Activated CD4-positive, alpha-beta T cell treated with anti-CD3 and anti-CD28 coated beads, Interleukin-2, amount 10 ng/mL, durations not matched to agents 24 days and 14 days (primary cell): ENCODE measurements at regions of chrX and their contacts with region 1.

Region 1: DNA sequence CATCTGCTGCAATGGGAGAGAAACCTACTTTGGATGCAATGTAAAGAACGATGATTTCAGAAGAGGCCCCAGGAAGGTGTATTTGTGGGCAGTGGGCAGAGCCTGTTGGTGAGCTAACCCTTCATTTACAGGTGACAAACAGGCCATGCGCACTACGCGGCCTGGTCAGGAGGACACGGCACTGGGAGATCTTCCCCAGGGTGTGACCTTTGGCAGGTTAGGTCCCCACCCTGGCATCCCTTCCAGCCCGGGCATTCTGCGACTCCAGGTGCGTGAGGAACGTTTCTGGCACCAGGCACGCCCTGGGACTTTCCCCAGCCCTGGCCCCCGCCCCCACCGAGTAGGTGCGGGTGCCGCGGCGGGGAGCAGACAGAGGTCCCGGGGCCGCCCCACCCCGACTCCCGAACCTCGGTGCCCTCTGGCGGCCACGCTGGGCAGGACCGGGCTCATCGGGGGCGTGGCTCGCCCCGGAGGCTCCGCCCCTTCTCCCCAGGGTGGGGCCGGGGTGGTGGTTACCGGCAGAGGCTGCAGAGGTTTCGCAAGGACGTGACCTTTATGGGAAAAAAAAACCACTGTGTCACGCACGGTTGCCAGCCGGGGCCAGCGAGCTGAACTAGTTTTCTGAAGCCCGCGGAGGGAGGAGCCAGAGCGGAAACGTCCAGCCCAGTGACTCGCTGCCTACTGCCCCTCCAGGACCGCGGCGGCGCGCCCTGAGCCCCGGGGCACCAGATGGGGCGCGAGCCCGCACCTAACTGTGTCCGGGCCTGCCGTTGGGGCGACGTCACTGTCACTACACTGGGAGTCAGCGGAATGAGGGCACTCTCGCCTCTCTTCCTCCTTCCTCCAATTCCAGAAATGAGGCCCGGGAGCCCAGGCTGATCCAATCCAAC is 5.0 kb upstream of the NYX start:
- DNase-seq: peak; percentile 97
- H3K4me3 Mint-ChIP-seq: peak overlapping the region; percentile 68
- H3K27ac Mint-ChIP-seq: peak overlapping the region; percentile 90
- H3K4me1 Mint-ChIP-seq: peaks cover 16% of the 10 kb centered on the region
- H3K27me3 Mint-ChIP-seq: no peaks in the 10 kb centered on the region

Region 2: GRCh38 chrX:41084044-41084892 is 357.9 kb before region 1 on chrX:
- intact Hi-C with region 1: loop called (anchors 5 kb)
- DNase-seq: peak; percentile 97
- H3K4me3 Mint-ChIP-seq: peak overlapping the region; percentile 92
- H3K27ac Mint-ChIP-seq: peak overlapping the region; percentile 99
- H3K4me1 Mint-ChIP-seq: peaks cover 10% of the 10 kb centered on the region
- H3K27me3 Mint-ChIP-seq: peaks cover 2% of the 10 kb centered on the region

Region 3: GRCh38 chrX:41333744-41334259 is 108.4 kb before region 1 on chrX and contains the start of gene DDX3X:
- intact Hi-C with region 1: loop called (anchors 1 kb)
- DNase-seq: peak; percentile 95
- H3K4me3 Mint-ChIP-seq: peak within 1 kb of the TSS; percentile 98
- H3K27ac Mint-ChIP-seq: peak within 1 kb of the TSS; percentile 100
- H3K4me1 Mint-ChIP-seq: peaks cover 25% of the 10 kb centered on the region
- H3K27me3 Mint-ChIP-seq: no peaks in the 10 kb centered on the region
- total RNA-seq, gene DDX3X: 307 and 313 TPM in 2 replicates

Region 4: GRCh38 chrX:41381685-41382084 is 60.5 kb before region 1 on chrX:
- intact Hi-C with region 1: loop called (anchors 1 kb)
- DNase-seq: no peak
- H3K4me3 Mint-ChIP-seq: no peak overlapping the region
- H3K27ac Mint-ChIP-seq: peak overlapping the region; percentile 56
- H3K4me1 Mint-ChIP-seq: peaks cover 26% of the 10 kb centered on the region
- H3K27me3 Mint-ChIP-seq: no peaks in the 10 kb centered on the region

Region 5: GRCh38 chrX:41664307-41665299 is 222.4 kb after region 1 on chrX:
- intact Hi-C with region 1: loop called (anchors 10 kb)
- DNase-seq: peak; percentile 55
- H3K4me3 Mint-ChIP-seq: peak overlapping the region; percentile 6
- H3K27ac Mint-ChIP-seq: peak overlapping the region; percentile 53
- H3K4me1 Mint-ChIP-seq: peaks cover 34% of the 10 kb centered on the region
- H3K27me3 Mint-ChIP-seq: no peaks in the 10 kb centered on the region